Naive thymus-derived CD4-positive, alpha-beta T cell (primary cell): ENCODE measurements at regions of chr1 and their contacts with region 1.

Region 1: GRCh38 chr1:11979851-11980675 is at the start of gene MFN2:
- DNase-seq: peak; percentile 89 to 97 (median 94)
- ATAC-seq: peak; percentile 94
- H3K4me3 ChIP-seq: peak within 1 kb of the TSS; percentile 88
- H3K4me3 Mint-ChIP-seq: peak within 1 kb of the TSS; percentile 86 to 99 (median 92)
- H3K27ac ChIP-seq: peak within 1 kb of the TSS; percentile 98
- H3K27ac Mint-ChIP-seq: peak within 1 kb of the TSS; percentile 85 to 98 (median 94)
- H3K4me1 ChIP-seq: peaks cover 9 to 22% of the 10 kb centered on the region in 2 donors
- H3K4me1 Mint-ChIP-seq: peaks cover 33 to 46% (median 41%) of the 10 kb centered on the region in 7 donors
- H3K27me3 ChIP-seq: no peaks in the 10 kb centered on the region
- H3K27me3 Mint-ChIP-seq: no peaks in the 10 kb centered on the region
- total RNA-seq, gene MFN2: 40.2 to 58.6 (median 44.8) TPM

Region 2: GRCh38 chr1:11925938-11926292 is 54.1 kb before region 1 on chr1:
- CTCF ChIA-PET with region 1: interaction called, 6 read pairs
- POLR2A ChIA-PET with region 1: no interaction called
- intact Hi-C with region 1: loop called (anchors 1 kb)
- DNase-seq: peak in 3 of 9 donors; percentile 22 to 27 (median 23)
- ATAC-seq: peak; percentile 28
- H3K4me3 ChIP-seq: no peak overlapping the region
- H3K4me3 Mint-ChIP-seq: peak overlapping the region in 4 of 10 donors; percentile 82 to 90 (median 84)
- H3K27ac ChIP-seq: peak overlapping the region; percentile 7
- H3K27ac Mint-ChIP-seq: peak overlapping the region in 4 of 9 donors; percentile 60 to 81 (median 71)
- H3K4me1 ChIP-seq: peaks cover 14 to 28% of the 10 kb centered on the region in 2 donors
- H3K4me1 Mint-ChIP-seq: peaks cover 24 to 50% (median 31%) of the 10 kb centered on the region in 7 donors
- H3K27me3 ChIP-seq: no peaks in the 10 kb centered on the region
- H3K27me3 Mint-ChIP-seq: no peaks in the 10 kb centered on the region

Region 3: DNA sequence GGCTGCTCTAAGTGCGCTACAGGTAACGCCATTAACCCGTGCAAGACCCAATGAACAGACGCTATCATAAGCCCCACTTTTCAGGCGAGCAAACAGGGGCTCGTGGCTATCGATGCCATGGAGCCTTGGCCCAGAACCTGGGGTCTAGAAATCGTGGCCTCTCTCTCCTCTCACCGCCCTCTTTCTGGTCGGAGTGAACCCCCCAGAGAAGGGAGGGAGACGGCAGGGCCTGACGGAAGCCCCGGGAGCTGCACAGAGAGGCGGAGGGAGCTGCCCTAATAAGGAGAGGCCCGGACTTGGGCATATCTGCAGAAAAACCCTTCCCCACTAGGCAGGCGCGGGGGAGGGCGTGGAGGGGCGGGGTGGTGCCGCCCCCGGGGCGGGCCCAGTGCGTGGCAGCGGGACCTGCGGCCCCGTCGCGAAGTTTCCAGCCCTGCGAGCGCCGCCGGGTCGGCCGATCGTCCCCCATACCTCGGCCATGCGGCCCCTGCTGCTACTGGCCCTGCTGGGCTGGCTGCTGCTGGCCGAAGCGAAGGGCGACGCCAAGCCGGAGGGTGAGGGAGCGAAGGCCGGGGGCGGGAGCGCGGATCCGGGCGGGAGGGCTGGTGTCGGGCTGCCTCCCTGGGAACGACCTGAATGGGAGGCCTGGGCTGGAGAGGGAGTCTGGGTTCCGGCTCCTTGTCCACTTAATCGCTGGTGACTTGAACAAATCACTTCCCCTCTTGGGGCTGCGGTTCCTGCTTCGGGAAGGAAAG is 45.6 kb before region 1 on chr1 and contains the start of gene PLOD1:
- CTCF ChIA-PET with region 1: interaction called, 6 read pairs
- POLR2A ChIA-PET with region 1: no interaction called
- intact Hi-C with region 1: loop called (anchors 1 to 2 kb)
- DNase-seq: peak; percentile 50 to 83 (median 67)
- ATAC-seq: peak; percentile 100
- H3K4me3 ChIP-seq: peak within 1 kb of the TSS; percentile 68
- H3K4me3 Mint-ChIP-seq: peak within 1 kb of the TSS; percentile 77 to 87 (median 82)
- H3K27ac ChIP-seq: peak within 1 kb of the TSS; percentile 54
- H3K27ac Mint-ChIP-seq: peak within 1 kb of the TSS in 4 of 9 donors; percentile 45 to 59 (median 52)
- H3K4me1 ChIP-seq: peaks cover 3 to 7% of the 10 kb centered on the region in 2 donors
- H3K4me1 Mint-ChIP-seq: peaks cover 0 to 18% (median 0%) of the 10 kb centered on the region in 7 donors
- H3K27me3 ChIP-seq: no peaks in the 10 kb centered on the region
- H3K27me3 Mint-ChIP-seq: no peaks in the 10 kb centered on the region
- total RNA-seq, gene PLOD1: 3.6 to 24.2 (median 4.8) TPM